ENCODE measurements at regions of chr6 and their contacts with region 1.

Region 1: GRCh38 chr6:127459231-127459641 is at the start of gene KIAA0408:
- DNase-seq: peak; percentile 89
- H3K4me3 ChIP-seq: peak within 1 kb of the TSS; percentile 20 to 26
- H3K27ac ChIP-seq: peak within 1 kb of the TSS; percentile 83 to 88
- H3K4me1 ChIP-seq: no peaks in the 10 kb centered on the region
- H3K27me3 ChIP-seq: no peaks in the 10 kb centered on the region
- CTCF ChIP-seq: no peak
- POLR2A ChIP-seq: no peak
- total RNA-seq, gene KIAA0408: 1.5 to 6.3 TPM

Region 2: DNA sequence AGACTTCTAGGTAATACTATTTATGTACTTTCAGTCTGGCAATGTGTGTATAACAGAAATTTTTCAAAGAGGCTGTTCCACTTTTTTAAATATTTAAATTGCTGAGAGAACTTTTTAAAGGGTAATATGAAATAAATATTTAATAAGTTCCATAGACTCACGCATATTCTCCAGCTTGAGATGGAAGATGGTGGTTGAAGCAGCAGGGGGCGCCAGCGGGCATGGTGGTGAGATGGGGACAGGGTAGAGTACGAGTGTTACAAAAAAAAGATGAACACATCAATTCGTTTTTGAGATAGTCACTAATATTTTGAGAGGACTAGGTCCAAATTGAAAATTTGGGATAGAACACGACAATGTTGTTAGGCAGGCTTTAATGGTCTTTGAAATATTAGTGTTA is 272.3 kb before region 1 on chr6:
- intact Hi-C with region 1: no loop called
- DNase-seq: no peak
- H3K4me3 ChIP-seq: no peak overlapping the region
- H3K27ac ChIP-seq: no peak overlapping the region
- H3K4me1 ChIP-seq: no peaks in the 10 kb centered on the region
- H3K27me3 ChIP-seq: no peaks in the 10 kb centered on the region
- CTCF ChIP-seq: peak in 2 of 4 experiments; percentile 12 to 18
- POLR2A ChIP-seq: no peak

Region 3: GRCh38 chr6:127342946-127343808 is 116.1 kb before region 1 on chr6 and contains the start of gene ECHDC1:
- intact Hi-C with region 1: loop called (anchors 2 kb)
- DNase-seq: peak; percentile 33
- H3K4me3 ChIP-seq: peak within 1 kb of the TSS; percentile 49 to 60
- H3K27ac ChIP-seq: peak within 1 kb of the TSS; percentile 79 to 81
- H3K4me1 ChIP-seq: peaks cover 6% of the 10 kb centered on the region
- H3K27me3 ChIP-seq: no peaks in the 10 kb centered on the region
- CTCF ChIP-seq: no peak
- POLR2A ChIP-seq: peak; percentile 13
- total RNA-seq, gene ECHDC1: 26.0 to 58.7 TPM

Region 4: GRCh38 chr6:127391094-127391953 is 67.9 kb before region 1 on chr6:
- intact Hi-C with region 1: loop called (anchors 5 kb)
- DNase-seq: no peak
- H3K4me3 ChIP-seq: no peak overlapping the region
- H3K27ac ChIP-seq: peak overlapping the region in 1 of 2 donors; percentile 4
- H3K4me1 ChIP-seq: no peaks in the 10 kb centered on the region
- H3K27me3 ChIP-seq: no peaks in the 10 kb centered on the region
- CTCF ChIP-seq: no peak
- POLR2A ChIP-seq: no peak

Region 5: DNA sequence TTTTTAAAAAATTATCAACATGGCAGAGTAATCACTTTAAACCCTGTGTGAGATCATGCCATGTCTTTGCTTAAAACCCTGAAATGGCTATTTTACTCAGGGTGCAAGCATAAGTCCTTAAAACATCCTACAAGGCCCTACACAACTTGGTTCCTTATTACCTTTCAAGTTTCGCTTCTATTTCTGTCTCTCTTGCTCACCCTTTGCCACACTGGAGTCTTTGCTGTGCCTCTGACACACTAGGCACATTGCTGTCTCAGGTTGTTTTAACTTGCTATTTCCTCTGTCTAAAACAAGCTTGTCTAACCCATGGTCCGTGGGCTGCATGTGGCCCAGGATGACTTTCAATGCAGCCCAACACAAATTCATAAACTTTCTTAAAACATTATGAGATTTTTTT is 55.6 kb before region 1 on chr6:
- intact Hi-C with region 1: no loop called
- DNase-seq: no peak
- H3K4me3 ChIP-seq: no peak overlapping the region
- H3K27ac ChIP-seq: no peak overlapping the region
- H3K4me1 ChIP-seq: no peaks in the 10 kb centered on the region
- H3K27me3 ChIP-seq: no peaks in the 10 kb centered on the region
- CTCF ChIP-seq: no peak
- POLR2A ChIP-seq: no peak

Measured in prostate gland (tissue), 2 donors.